Activated CD4-positive, alpha-beta memory T cell treated with anti-CD3 and anti-CD28 coated beads, Interleukin-2, amount 10 ng/mL, durations not matched to agents 7 days and 5 days (primary cell): ENCODE measurements at regions of chr17 and their contacts with region 1.

Region 1: GRCh38 chr17:38735161-38735997 is 5.2 kb downstream of the CISD3 start:
- DNase-seq: peak; percentile 74
- H3K4me3 Mint-ChIP-seq: no peak overlapping the region
- H3K27ac Mint-ChIP-seq: no peak overlapping the region
- H3K4me1 Mint-ChIP-seq: peaks cover 43% of the 10 kb centered on the region
- H3K27me3 Mint-ChIP-seq: peaks cover 3% of the 10 kb centered on the region

Region 2: GRCh38 chr17:38600906-38601305 is 134.5 kb before region 1 on chr17:
- CTCF ChIA-PET with region 1: no interaction called
- POLR2A ChIA-PET with region 1: no interaction called
- DNase-seq: no peak
- H3K4me3 Mint-ChIP-seq: no peak overlapping the region
- H3K27ac Mint-ChIP-seq: no peak overlapping the region
- H3K4me1 Mint-ChIP-seq: no peaks in the 10 kb centered on the region
- H3K27me3 Mint-ChIP-seq: peaks cover 85% of the 10 kb centered on the region

Region 3: DNA sequence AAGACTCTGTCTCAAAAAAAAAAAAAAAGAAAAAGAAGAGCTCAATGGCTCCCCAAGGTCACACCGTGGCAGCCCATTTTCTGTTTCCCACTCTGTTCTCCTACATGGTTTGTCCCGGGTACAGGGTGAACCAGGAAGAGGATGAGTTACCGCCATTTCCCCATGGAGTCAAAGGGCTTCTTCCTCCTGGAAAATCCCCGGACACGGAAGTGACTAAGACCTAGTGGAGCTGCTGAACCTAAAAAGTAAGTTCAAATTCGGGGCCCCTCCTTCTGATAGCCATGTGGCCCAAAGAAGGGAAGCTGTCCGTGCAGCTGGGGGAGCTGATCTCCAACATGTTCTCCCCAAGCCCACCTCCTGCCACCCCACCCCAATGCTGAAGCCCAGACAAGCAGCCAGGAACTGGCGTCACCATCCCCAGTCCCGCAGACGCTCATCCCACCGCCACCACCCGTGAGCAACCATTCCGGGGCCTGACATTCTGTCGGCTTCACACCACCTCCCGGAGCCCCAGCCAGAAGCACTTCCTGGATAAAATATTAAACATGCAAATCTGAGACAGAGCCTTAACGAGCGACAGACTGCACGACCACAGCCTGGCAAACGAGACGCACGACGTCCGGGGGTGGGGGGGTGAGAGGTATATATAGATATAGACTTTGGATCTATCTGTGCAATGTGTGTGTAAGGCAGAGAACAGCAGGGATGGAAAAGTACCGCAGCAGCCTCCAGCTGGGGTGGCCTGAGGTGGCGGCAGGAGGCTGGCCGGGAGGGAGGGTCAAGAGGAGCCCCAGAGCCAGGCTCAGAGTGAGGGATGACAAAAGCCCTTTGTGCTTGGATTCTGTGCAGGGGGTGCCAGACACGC is 78.2 kb before region 1 on chr17:
- CTCF ChIA-PET with region 1: no interaction called
- POLR2A ChIA-PET with region 1: no interaction called
- DNase-seq: no peak
- H3K4me3 Mint-ChIP-seq: no peak overlapping the region
- H3K27ac Mint-ChIP-seq: no peak overlapping the region
- H3K4me1 Mint-ChIP-seq: peaks cover 4% of the 10 kb centered on the region
- H3K27me3 Mint-ChIP-seq: peaks cover 33% of the 10 kb centered on the region

Region 4: DNA sequence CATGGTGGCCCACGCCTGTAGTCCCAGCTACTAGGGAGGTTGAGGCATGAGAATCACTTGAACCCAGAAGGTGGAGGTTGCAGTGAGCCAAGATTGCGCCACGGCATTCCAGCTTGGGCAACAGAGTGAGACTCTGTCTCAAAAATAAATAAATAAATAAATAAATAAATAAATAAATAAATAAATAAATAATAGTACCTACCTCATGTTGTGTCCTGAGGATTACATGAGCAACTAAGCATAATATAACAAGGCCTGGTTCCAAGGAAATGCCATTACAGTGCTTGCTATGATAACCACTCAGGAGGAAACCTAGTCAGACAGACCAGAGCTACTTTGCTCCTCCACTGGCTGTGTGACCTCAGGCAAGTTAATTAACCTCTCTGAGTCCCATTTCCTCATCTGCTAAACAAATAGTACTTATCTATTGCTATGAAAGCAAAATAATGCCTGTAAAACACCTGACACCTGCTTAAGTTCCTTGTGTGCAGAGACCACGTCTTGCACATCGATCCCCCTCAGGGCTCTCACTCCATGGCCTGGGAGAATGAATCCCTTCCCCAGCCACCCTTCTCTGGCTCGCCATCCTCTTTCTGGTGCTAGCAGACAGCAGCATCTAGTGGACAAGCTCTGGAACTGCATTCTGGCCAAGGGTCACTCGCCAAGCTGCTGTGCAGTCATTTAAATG is 68.1 kb before region 1 on chr17:
- CTCF ChIA-PET with region 1: interaction called, 10 read pairs
- POLR2A ChIA-PET with region 1: interaction called, 4 read pairs
- DNase-seq: peak; percentile 64
- H3K4me3 Mint-ChIP-seq: no peak overlapping the region
- H3K27ac Mint-ChIP-seq: no peak overlapping the region
- H3K4me1 Mint-ChIP-seq: peaks cover 10% of the 10 kb centered on the region
- H3K27me3 Mint-ChIP-seq: peaks cover 64% of the 10 kb centered on the region

Region 5: DNA sequence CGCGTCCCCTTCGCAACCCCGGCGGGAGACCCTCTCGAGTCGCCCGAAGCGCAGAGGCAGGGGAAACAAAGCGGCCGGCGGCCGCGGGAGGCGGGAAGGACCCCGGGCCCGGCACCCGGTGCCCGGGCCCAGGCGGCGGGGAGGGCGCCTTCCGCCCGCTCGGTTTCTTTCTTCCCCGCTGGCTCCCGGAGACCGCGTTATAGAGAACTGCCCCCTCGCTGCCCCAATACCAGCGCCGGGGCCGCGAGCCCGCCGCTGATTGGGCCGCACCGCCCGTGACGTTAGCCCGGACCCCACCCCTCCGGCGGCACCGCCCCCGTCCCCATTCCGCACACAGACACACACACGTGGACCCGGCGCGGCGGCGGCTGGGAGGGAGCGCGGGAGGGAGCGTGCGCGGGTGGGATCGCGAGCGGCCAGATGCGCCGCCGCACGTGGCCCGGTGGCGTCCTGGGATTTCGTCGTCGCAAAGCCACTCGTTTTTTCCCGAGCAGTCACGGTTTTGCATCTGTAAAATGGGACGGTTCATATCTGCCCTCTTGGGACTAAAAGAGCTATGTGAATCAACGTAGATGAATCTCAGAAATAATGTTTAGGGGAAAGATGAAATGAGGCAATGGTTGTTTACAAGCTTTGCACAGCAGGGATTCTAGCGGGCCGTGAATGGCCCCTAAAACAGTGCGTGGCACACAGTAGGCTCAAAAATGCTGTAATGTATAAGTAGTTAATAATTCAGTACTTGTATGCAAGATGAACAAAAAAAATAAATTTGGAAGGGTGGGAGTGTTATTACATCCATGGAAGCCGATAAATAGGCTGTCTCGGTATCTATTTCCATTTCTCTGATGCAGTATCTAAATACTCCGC is 60.4 kb before region 1 on chr17 and contains the start of gene EPOP:
- CTCF ChIA-PET with region 1: interaction called, 86 read pairs
- POLR2A ChIA-PET with region 1: interaction called, 52 read pairs
- DNase-seq: peak; percentile 91
- H3K4me3 Mint-ChIP-seq: peak within 1 kb of the TSS; percentile 63
- H3K27ac Mint-ChIP-seq: no peak within 1 kb of the TSS
- H3K4me1 Mint-ChIP-seq: peaks cover 44% of the 10 kb centered on the region
- H3K27me3 Mint-ChIP-seq: peaks cover 27% of the 10 kb centered on the region
- total RNA-seq, gene EPOP: 10.2 to 10.3 TPM

Region 6: DNA sequence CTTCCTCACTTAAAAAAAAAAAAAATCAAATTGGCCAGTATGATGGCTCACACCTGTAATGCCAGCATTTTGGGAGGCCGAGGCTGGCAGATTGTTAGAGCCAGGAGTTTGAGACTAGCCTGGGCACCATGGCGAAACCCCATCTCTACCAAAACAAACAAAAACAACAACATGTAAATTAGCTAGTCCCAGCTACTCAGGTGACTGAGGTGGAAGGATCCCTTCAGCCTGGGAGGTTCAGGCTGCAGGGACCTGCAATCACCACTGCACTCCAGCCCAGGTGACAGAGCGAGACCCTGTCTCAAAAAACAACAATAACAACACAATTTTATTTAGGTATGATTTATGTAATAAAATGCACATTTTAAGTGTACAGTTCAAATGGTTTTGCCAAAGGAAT is 54.3 kb before region 1 on chr17:
- CTCF ChIA-PET with region 1: interaction called, 86 read pairs
- POLR2A ChIA-PET with region 1: interaction called, 52 read pairs
- DNase-seq: no peak
- H3K4me3 Mint-ChIP-seq: no peak overlapping the region
- H3K27ac Mint-ChIP-seq: no peak overlapping the region
- H3K4me1 Mint-ChIP-seq: peaks cover 13% of the 10 kb centered on the region
- H3K27me3 Mint-ChIP-seq: peaks cover 5% of the 10 kb centered on the region

Region 7: GRCh38 chr17:38702166-38702899 is 33.0 kb before region 1 on chr17:
- CTCF ChIA-PET with region 1: interaction called, 17 read pairs
- POLR2A ChIA-PET with region 1: interaction called, 52 read pairs
- DNase-seq: peak; percentile 86
- H3K4me3 Mint-ChIP-seq: peak overlapping the region; percentile 87
- H3K27ac Mint-ChIP-seq: peak overlapping the region; percentile 99
- H3K4me1 Mint-ChIP-seq: peaks cover 46% of the 10 kb centered on the region
- H3K27me3 Mint-ChIP-seq: no peaks in the 10 kb centered on the region

Region 8: GRCh38 chr17:38752119-38752929 is 16.9 kb after region 1 on chr17 and contains the start of gene PSMB3:
- CTCF ChIA-PET with region 1: interaction called, 15 read pairs
- POLR2A ChIA-PET with region 1: interaction called, 4 read pairs
- DNase-seq: peak; percentile 97
- H3K4me3 Mint-ChIP-seq: peak within 1 kb of the TSS; percentile 97
- H3K27ac Mint-ChIP-seq: peak within 1 kb of the TSS; percentile 94
- H3K4me1 Mint-ChIP-seq: peaks cover 47% of the 10 kb centered on the region
- H3K27me3 Mint-ChIP-seq: peaks cover 28% of the 10 kb centered on the region
- total RNA-seq, gene PSMB3: 241 to 242 TPM

Region 9: DNA sequence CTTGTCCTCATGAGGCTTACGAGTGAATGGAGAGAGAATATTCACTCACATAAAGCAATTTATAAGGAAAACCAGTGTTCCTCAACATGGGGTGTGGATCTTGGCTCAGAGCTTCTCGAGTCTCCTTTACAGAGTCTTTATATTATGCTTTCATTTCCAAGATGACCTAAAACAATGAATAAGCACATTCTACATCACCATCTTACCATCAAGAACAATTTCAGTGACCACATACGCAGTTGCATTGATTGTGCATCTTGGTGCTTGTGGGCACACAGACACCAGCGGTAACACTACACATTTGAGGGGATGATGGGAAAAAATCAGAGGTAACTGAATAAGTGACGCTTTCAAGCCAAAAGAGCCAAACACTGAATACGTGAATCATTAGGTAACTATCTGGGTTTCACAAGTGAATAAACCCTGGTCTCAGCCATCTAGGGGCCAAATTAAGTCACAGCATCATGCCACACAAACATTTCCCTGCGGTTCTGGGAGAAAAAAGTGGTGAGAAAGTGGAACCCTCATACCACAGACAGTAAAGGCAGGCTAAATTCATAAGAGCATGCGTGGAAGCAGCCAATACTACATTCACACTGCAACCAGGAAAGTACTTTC is 80.3 kb after region 1 on chr17:
- CTCF ChIA-PET with region 1: no interaction called
- POLR2A ChIA-PET with region 1: no interaction called
- DNase-seq: peak; percentile 42
- H3K4me3 Mint-ChIP-seq: no peak overlapping the region
- H3K27ac Mint-ChIP-seq: peak overlapping the region; percentile 71
- H3K4me1 Mint-ChIP-seq: peaks cover 8% of the 10 kb centered on the region
- H3K27me3 Mint-ChIP-seq: no peaks in the 10 kb centered on the region

Region 10: DNA sequence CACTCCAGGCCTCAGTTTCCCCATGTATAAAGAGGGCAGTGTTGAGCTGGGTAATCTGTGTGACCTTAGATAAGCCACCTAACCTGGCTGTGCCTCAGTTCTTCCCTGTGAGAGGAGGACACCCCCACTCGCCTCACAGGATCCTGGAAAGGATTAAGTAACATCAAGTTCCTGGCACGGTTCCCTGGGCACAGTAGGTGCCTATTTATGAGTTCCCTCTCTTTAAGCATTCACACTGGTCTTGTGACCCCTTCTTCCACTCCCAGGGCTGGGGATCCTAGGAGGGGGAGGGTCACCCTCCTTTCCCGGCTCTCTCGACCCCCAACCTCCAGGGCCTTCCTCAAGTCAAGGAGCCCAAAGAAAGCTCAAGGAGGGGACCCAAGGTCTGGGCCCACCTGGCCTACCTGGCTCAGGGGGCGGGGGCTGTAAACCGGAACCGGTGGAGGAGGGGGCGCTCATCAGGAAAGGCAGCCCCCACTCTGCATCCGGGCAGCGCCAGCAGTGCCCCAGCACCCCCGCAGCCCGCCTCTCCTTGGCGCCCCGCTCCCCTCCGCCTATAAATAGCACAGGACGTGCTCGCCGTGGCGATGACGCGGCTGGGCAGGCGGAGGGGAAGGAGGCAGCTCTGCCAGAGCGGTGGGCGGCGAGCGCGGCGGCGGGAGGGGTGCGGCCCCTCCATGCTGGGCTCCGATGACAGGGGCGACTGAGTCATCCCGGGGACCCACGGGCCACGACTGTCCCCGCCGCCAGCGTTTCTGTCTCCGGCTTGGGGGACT is 474.1 kb after region 1 on chr17:
- CTCF ChIA-PET with region 1: no interaction called
- POLR2A ChIA-PET with region 1: no interaction called
- DNase-seq: peak; percentile 65
- H3K4me3 Mint-ChIP-seq: peak overlapping the region; percentile 4
- H3K27ac Mint-ChIP-seq: no peak overlapping the region
- H3K4me1 Mint-ChIP-seq: peaks cover 18% of the 10 kb centered on the region
- H3K27me3 Mint-ChIP-seq: peaks cover 17% of the 10 kb centered on the region